AG04449 (cell line): ENCODE measurements at regions of chr11 and their contacts with region 1.

Region 1: DNA sequence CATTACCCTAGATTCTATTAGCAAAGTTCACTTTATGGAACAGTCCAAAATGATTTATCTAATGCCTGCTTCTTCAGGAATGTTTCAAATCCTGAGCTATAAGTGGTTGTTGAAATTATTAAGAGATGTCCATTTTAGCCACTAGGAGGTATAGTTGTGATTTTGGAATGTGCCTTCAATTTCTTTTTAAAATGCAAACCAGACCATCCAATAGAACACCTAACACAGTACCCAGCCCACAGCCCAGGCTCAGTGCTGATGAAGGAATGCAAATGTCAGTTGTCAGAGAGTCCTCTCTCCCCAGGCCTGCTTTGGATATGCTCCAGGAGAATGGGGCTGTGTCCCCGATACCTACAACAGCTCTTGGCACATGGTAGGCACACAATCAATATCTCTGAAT is 85.8 kb upstream of the E2F8 start:
- DNase-seq: no peak
- H3K4me3 ChIP-seq: no peak overlapping the region
- CTCF ChIP-seq: no peak

Region 2: GRCh38 chr11:19311308-19312030 is 15.0 kb before region 1 on chr11:
- CTCF ChIA-PET with region 1: interaction called, 10 read pairs
- POLR2A ChIA-PET with region 1: no interaction called
- DNase-seq: no peak
- H3K4me3 ChIP-seq: no peak overlapping the region
- CTCF ChIP-seq: peak; percentile 88

Region 3: GRCh38 chr11:19345848-19346681 is 19.6 kb after region 1 on chr11:
- CTCF ChIA-PET with region 1: interaction called, 11 read pairs
- POLR2A ChIA-PET with region 1: no interaction called
- DNase-seq: no peak
- H3K4me3 ChIP-seq: peak overlapping the region; percentile 9
- CTCF ChIP-seq: peak; percentile 11

Region 4: DNA sequence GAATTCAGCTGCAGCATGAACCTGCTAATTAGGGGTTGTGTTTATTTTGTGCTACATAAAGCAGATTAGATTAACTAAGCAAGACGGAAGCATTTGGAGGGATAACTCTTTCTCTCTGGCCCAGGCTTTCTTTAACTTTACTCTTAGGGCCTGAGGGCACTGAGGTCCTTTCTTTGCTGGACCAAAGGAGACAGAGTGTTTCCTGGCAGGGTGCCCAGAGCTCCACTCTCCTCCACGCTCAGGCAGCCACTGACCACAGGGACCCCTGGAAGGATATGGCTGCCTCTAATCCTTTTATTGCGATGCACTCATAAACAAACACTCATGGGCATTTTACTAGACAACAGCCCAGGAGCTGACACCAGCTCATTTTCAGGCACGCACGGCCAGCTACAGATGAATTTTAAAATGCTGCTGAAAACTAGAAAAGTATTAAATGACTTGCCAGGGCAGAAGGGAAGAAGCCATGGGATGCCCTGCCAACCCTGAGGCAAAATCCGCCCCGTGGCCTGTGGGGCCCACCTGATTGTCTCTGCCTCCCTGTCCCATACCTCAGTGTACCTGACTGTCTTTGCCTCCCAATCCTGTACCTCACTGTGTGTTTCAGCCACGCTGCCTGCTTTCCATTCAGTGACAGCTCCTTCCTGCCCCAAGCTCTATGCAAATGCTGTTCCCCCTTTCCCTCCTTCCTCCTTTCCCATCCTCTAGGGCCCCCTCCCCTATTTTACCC is 193.6 kb after region 1 on chr11:
- CTCF ChIA-PET with region 1: interaction called, 12 read pairs
- POLR2A ChIA-PET with region 1: no interaction called
- DNase-seq: no peak
- H3K4me3 ChIP-seq: no peak overlapping the region
- CTCF ChIP-seq: no peak

Region 5: GRCh38 chr11:19546325-19546724 is 219.8 kb after region 1 on chr11:
- CTCF ChIA-PET with region 1: interaction called, 190 read pairs
- POLR2A ChIA-PET with region 1: no interaction called
- DNase-seq: no peak
- H3K4me3 ChIP-seq: no peak overlapping the region
- CTCF ChIP-seq: no peak